ENCODE measurements at regions of chr20 and their contacts with region 1.

Region 1: GRCh38 chr20:31738729-31739561 is at the start of gene TPX2:
- DNase-seq: peak; percentile 96 to 97
- ATAC-seq: peak; percentile 99
- H3K4me3 ChIP-seq: peak within 1 kb of the TSS; percentile 57 to 86
- H3K27ac ChIP-seq: peak within 1 kb of the TSS; percentile 34 to 48
- H3K4me1 ChIP-seq: no peaks in the 10 kb centered on the region
- H3K27me3 ChIP-seq: no peaks in the 10 kb centered on the region
- total RNA-seq, gene TPX2: 0.75 to 2.1 TPM

Region 2: GRCh38 chr20:30963591-30963990 is 775.4 kb before region 1 on chr20:
- intact Hi-C with region 1: no loop called
- DNase-seq: no peak
- ATAC-seq: no peak
- H3K4me3 ChIP-seq: no peak overlapping the region
- H3K27ac ChIP-seq: no peak overlapping the region
- H3K4me1 ChIP-seq: no peaks in the 10 kb centered on the region
- H3K27me3 ChIP-seq: no peaks in the 10 kb centered on the region

Region 3: GRCh38 chr20:31764641-31765305 is 25.8 kb after region 1 on chr20:
- intact Hi-C with region 1: no loop called
- DNase-seq: no peak
- ATAC-seq: no peak
- H3K4me3 ChIP-seq: no peak overlapping the region
- H3K27ac ChIP-seq: no peak overlapping the region
- H3K4me1 ChIP-seq: no peaks in the 10 kb centered on the region
- H3K27me3 ChIP-seq: no peaks in the 10 kb centered on the region

Region 4: GRCh38 chr20:31815408-31816188 is 76.7 kb after region 1 on chr20:
- intact Hi-C with region 1: loop called (anchors 5 to 10 kb)
- DNase-seq: peak in 1 of 2 donors; percentile 62
- ATAC-seq: peak; percentile 66
- H3K4me3 ChIP-seq: no peak overlapping the region
- H3K27ac ChIP-seq: peak overlapping the region; percentile 78 to 88
- H3K4me1 ChIP-seq: peaks cover 4 to 5% of the 10 kb centered on the region in 2 donors
- H3K27me3 ChIP-seq: no peaks in the 10 kb centered on the region

Region 5: DNA sequence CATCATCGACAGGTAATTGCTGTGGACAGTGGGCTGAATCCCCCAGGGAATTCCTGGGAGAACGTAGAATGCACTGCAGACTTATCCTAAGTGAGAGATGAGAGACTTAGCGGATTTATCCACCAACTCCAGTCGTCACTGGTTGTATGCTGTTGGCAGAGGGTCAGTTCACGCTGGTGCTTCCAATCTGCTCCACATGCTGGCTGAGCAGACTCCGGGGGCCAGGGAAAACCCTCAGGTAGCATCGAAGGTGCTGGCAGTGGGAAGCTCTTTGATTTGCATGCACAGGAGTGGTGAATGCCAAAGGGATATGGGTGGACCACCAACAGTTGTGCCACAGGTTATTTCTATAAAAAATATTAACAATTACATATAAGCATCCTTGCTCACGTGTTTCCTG is 151.7 kb after region 1 on chr20:
- intact Hi-C with region 1: no loop called
- DNase-seq: no peak
- ATAC-seq: no peak
- H3K4me3 ChIP-seq: no peak overlapping the region
- H3K27ac ChIP-seq: no peak overlapping the region
- H3K4me1 ChIP-seq: no peaks in the 10 kb centered on the region
- H3K27me3 ChIP-seq: no peaks in the 10 kb centered on the region

Measured in aorta (tissue), 5 donors.